ENCODE measurements at regions of chr11 and their contacts with region 1.

Region 1: DNA sequence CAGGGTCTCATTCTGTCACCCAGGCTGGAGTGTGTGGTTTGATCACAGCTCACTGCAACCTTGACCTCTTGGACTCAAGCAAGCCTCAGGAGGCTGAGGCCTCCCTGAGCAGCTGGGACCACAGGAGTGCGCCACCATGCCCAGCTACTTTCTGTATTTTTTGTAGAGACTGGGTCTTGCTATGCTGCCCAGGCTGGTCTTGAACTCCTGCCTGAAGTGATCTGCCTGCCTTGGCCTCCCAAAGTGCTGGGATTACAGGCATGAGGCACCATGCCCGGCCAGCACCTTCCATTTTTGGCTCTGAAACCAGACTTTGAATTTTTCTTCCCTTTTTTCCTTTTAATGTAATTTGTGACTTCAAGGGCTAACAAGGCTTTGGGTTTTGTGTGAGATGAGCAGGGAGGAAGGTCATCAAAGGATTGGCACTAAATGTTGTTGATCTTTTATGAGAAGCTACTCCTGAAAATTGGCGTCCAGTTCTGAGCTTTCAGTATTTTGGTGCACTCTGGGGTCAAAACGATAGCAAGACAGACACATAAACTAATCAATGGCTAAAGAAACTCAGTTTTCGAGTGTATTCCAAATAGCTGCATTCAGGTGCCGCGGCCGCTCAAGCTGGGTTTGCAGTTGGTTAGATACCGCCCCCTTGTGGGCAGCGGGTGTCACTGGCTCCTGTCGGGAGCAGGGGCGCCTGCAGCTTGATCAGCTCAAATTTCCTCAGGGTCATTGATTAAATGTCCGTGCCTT is 51.9 kb upstream of the CLMP start:
- DNase-seq: peak; percentile 45
- ATAC-seq: peak; percentile 75
- H3K4me3 Mint-ChIP-seq: no peak overlapping the region
- H3K27ac Mint-ChIP-seq: no peak overlapping the region
- H3K4me1 Mint-ChIP-seq: peaks cover 5% of the 10 kb centered on the region
- H3K27me3 Mint-ChIP-seq: peaks cover 14% of the 10 kb centered on the region
- CTCF ChIP-seq: peak; percentile 85

Region 2: GRCh38 chr11:122796128-122796717 is 450.7 kb before region 1 on chr11:
- CTCF ChIA-PET with region 1: no interaction called
- POLR2A ChIA-PET with region 1: no interaction called
- intact Hi-C with region 1: loop called (anchors 5 kb)
- DNase-seq: peak; percentile 52
- ATAC-seq: peak; percentile 97
- H3K4me3 Mint-ChIP-seq: no peak overlapping the region
- H3K27ac Mint-ChIP-seq: no peak overlapping the region
- H3K4me1 Mint-ChIP-seq: peaks cover 4% of the 10 kb centered on the region
- H3K27me3 Mint-ChIP-seq: no peaks in the 10 kb centered on the region
- CTCF ChIP-seq: peak; percentile 39

Region 3: GRCh38 chr11:122863704-122864326 is 383.1 kb before region 1 on chr11:
- CTCF ChIA-PET with region 1: interaction called, 6 read pairs
- POLR2A ChIA-PET with region 1: no interaction called
- intact Hi-C with region 1: loop called (anchors 5 kb)
- DNase-seq: no peak
- ATAC-seq: no peak
- H3K4me3 Mint-ChIP-seq: no peak overlapping the region
- H3K27ac Mint-ChIP-seq: no peak overlapping the region
- H3K4me1 Mint-ChIP-seq: peaks cover 9% of the 10 kb centered on the region
- H3K27me3 Mint-ChIP-seq: peaks cover 33% of the 10 kb centered on the region
- CTCF ChIP-seq: peak; percentile 80

Region 4: DNA sequence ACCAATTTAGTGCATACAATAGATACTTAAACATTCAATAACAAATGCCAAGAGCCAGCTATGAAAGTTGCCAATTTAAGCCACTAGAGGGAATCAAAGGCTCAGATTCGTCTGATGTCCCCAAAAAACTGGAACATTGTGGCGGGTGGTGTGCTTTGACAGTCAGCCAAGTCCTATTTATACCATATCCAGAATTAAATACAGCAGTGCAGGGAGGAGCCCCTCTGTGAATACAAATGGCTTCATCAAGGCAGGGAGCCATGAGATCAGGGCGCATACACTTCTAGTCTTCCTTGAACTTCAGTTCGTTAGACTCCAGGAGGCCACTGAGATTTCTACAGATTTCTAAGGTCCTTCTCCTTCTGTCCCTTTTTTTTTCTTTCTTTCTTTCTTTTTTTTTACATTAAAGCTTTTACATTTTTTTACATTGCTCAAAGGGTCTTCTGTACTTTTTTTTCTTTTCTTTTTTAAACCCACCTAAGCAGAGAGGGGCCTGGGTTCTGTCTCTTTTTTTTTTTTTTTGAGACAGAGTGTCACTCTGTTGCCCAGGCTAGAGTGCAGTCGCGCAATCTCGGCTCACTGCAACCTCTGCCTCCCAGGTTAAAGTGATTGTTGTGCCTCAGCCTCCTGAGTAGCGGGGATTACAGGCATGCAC is 143.5 kb before region 1 on chr11:
- CTCF ChIA-PET with region 1: interaction called, 13 read pairs
- POLR2A ChIA-PET with region 1: no interaction called
- intact Hi-C with region 1: no loop called
- DNase-seq: no peak
- ATAC-seq: peak; percentile 56
- H3K4me3 Mint-ChIP-seq: no peak overlapping the region
- H3K27ac Mint-ChIP-seq: no peak overlapping the region
- H3K4me1 Mint-ChIP-seq: peaks cover 3% of the 10 kb centered on the region
- H3K27me3 Mint-ChIP-seq: peaks cover 9% of the 10 kb centered on the region
- CTCF ChIP-seq: no peak

Region 5: DNA sequence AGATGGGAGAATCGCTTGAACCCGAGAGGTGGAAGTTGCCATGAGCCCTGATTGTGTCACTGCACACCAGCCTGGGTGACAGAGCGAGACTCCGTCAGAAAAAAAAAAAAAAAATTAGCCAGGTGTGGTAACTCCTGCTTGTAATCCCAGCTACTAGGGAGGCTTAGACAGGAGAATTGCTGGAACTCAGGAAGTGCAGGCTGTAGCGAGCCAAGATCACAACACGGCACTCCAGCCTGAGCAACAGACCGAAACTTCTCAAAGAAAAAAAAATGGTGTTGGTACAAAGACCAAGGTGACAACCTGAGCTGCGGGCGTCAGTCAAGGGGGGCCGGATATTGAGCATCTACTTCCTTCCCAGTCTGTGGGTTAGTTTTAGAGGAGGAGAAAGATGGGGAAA is 136.6 kb before region 1 on chr11:
- CTCF ChIA-PET with region 1: interaction called, 16 read pairs
- POLR2A ChIA-PET with region 1: no interaction called
- intact Hi-C with region 1: loop called (anchors 1 kb)
- DNase-seq: no peak
- ATAC-seq: no peak
- H3K4me3 Mint-ChIP-seq: no peak overlapping the region
- H3K27ac Mint-ChIP-seq: no peak overlapping the region
- H3K4me1 Mint-ChIP-seq: no peaks in the 10 kb centered on the region
- H3K27me3 Mint-ChIP-seq: peaks cover 13% of the 10 kb centered on the region
- CTCF ChIP-seq: no peak

Region 6: GRCh38 chr11:123166071-123166559 is 80.8 kb before region 1 on chr11:
- CTCF ChIA-PET with region 1: no interaction called
- POLR2A ChIA-PET with region 1: no interaction called
- intact Hi-C with region 1: no loop called
- DNase-seq: no peak
- ATAC-seq: no peak
- H3K4me3 Mint-ChIP-seq: no peak overlapping the region
- H3K27ac Mint-ChIP-seq: no peak overlapping the region
- H3K4me1 Mint-ChIP-seq: no peaks in the 10 kb centered on the region
- H3K27me3 Mint-ChIP-seq: peaks cover 7% of the 10 kb centered on the region
- CTCF ChIP-seq: no peak

Measured in activated B cell treated with CpG ODN at 0.5 μM for 24 hours (primary cell).